Activated T-helper 2 cell treated with anti-CD3 and anti-CD28 coated beads, Interferon-gamma antibody, Interleukin-2, Interleukin-4, amounts not matched to agents 10 μg/mL and 5 μg/mL and 100 μg/mL, durations not matched to agents 14 hours and 24 hours and 36 hours (primary cell): ENCODE measurements at regions of chr4 and their contacts with region 1.

Region 1: GRCh38 chr4:184575306-184575705 is 73.9 kb downstream of the CASP3 start:
- DNase-seq: no peak
- H3K4me3 Mint-ChIP-seq: no peak overlapping the region
- H3K27ac Mint-ChIP-seq: peak overlapping the region; percentile 75
- H3K4me1 Mint-ChIP-seq: peaks cover 18% of the 10 kb centered on the region
- H3K27me3 Mint-ChIP-seq: no peaks in the 10 kb centered on the region

Region 2: DNA sequence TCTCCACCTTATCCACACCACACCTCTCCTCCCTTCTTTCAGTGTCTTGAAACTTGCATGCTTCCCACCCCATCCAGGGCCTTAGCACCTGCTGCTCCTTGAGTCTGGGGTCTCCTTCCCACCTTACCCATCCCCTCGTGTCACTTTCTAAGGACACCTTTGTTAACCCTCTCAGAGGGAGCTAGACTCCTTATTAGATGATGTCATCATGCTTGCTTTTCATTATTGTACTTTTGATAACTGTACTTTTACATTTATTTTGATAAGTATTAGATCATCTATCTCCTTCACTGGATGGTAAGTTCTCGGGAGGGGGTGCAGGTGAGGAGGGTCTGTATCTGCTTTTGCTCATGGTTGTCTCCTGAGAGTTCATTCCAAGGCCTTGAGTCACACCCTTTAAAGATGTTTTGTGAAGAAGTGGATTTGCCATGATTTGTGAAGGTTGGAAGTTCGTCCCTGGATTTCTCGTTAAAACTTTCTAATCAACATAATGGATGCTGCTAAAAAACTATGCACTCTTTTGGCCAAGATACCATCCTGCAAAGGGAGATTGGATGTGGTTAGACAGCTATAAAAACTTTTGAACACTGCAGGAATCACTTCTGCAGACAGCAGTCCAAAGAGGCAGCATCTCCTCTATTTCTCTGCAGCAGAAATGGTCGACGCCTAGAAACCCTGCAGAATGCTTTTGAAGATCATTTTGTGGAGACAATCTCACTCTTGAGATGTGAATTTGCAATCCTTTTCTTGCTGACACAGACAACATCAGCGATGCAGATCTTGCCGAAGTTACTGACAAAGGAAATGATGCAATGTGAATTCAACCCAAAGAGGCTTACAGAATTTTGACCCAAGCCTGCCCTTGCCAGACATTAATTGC is 427.2 kb before region 1 on chr4:
- intact Hi-C with region 1: no loop called
- DNase-seq: no peak
- H3K4me3 Mint-ChIP-seq: no peak overlapping the region
- H3K27ac Mint-ChIP-seq: no peak overlapping the region
- H3K4me1 Mint-ChIP-seq: peaks cover 12% of the 10 kb centered on the region
- H3K27me3 Mint-ChIP-seq: no peaks in the 10 kb centered on the region

Region 3: DNA sequence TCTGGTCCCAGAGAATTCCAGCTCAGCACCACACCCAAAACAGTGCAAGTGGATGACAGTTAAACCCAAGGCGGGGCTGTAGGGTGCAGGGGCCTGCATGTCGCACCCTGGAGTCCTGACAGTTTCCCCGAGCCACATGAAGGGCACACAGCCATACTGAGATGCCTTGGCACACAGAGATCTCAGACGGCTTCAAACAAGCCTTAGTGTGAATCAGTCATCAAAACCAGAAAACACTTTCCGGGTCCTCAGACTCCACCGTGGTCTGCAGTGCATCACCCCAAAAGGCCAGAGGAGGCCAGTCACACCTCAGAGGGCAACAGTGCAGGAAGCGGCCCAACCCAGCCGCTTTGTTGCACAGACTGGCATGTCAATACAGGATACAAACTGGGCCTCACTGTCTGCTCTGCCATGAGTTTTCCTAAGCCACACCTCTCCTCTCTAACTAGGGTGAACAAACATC is 293.0 kb before region 1 on chr4:
- intact Hi-C with region 1: loop called (anchors 2 kb)
- DNase-seq: peak; percentile 52
- H3K4me3 Mint-ChIP-seq: no peak overlapping the region
- H3K27ac Mint-ChIP-seq: peak overlapping the region; percentile 92
- H3K4me1 Mint-ChIP-seq: peaks cover 63% of the 10 kb centered on the region
- H3K27me3 Mint-ChIP-seq: no peaks in the 10 kb centered on the region

Region 4: GRCh38 chr4:184318852-184319251 is 256.5 kb before region 1 on chr4:
- intact Hi-C with region 1: loop called (anchors 1 kb)
- DNase-seq: peak; percentile 8
- H3K4me3 Mint-ChIP-seq: no peak overlapping the region
- H3K27ac Mint-ChIP-seq: peak overlapping the region; percentile 24
- H3K4me1 Mint-ChIP-seq: peaks cover 44% of the 10 kb centered on the region
- H3K27me3 Mint-ChIP-seq: no peaks in the 10 kb centered on the region

Region 5: DNA sequence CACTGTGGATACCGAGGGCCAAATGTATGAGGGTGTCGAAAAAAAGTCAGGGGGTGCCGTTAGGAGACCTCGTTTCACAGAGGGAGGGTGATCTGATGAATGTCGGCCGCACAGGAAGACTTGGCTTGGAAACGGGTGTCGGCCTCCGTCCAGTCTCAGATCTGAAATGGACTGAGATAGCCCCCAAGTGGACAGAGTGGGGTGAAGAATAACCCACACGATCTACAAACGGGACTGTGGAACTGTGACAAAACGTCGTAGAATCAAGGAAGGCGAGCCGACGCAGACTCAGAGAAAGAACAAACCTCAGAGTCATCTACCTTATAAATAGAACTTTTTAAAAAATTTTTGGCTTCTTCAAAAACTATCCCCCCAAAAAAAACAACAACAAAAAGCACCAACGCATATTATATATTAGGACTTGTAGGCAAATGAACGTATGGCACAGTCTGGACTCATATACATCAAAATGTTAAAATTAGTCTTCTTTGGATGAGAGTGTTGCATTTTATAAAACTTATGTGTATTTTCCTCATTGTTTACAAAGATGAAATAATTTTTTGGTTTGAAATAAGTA is 37.2 kb before region 1 on chr4:
- intact Hi-C with region 1: loop called (anchors 1 kb)
- DNase-seq: peak; percentile 53
- H3K4me3 Mint-ChIP-seq: peak overlapping the region; percentile 85
- H3K27ac Mint-ChIP-seq: peak overlapping the region; percentile 87
- H3K4me1 Mint-ChIP-seq: peaks cover 61% of the 10 kb centered on the region
- H3K27me3 Mint-ChIP-seq: no peaks in the 10 kb centered on the region

Region 6: GRCh38 chr4:184548648-184549341 is 26.5 kb before region 1 on chr4:
- intact Hi-C with region 1: no loop called
- DNase-seq: no peak
- H3K4me3 Mint-ChIP-seq: peak overlapping the region; percentile 48
- H3K27ac Mint-ChIP-seq: peak overlapping the region; percentile 66
- H3K4me1 Mint-ChIP-seq: peaks cover 48% of the 10 kb centered on the region
- H3K27me3 Mint-ChIP-seq: no peaks in the 10 kb centered on the region

Region 7: DNA sequence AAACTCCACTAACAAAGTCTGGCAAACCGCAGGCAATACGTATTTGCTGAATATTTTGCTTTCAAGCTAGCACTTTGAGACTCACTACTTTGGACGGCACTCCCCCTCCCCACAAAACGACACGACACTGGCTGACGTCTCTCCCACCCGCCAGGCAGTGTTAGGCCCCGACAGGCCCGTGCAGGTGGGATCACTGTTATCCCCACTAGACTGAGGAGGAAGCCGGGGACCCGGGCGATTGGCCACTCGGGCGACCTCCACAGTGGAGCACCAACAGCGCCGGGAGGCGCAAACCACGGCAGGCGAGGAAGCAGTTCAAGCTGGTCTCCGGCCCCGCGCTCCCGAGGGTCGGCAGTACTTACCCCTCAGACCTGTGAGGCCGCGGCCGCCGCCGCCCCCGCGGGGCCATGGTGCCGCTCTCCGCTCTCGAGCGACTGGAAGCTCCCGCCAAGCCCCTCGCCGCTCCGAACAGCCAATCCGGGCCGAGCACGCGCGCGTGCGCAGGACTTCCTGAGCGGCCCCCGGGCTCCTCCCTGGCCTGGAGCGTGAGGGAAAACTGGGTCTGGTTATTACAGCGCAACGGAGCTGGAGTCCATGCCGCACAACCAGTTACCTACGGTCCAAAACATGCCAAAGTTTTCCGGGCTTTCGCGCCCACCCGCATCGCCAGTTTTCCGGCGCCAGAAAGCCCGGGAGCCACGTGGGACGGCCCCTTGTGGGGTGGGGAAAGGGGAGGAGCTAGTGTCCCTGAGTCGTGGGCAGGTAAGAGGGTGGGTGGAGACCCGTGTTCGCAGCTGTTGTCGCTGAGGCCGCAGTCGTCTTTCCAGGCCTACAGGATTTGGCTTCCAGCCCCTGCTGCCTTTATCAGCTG is 158.6 kb after region 1 on chr4 and contains the start of gene CENPU:
- intact Hi-C with region 1: loop called (anchors 1 kb)
- DNase-seq: peak; percentile 96
- H3K4me3 Mint-ChIP-seq: peak within 1 kb of the TSS; percentile 93
- H3K27ac Mint-ChIP-seq: peak within 1 kb of the TSS; percentile 87
- H3K4me1 Mint-ChIP-seq: peaks cover 37% of the 10 kb centered on the region
- H3K27me3 Mint-ChIP-seq: no peaks in the 10 kb centered on the region
- total RNA-seq, gene CENPU: 60.9 and 74.2 TPM in 2 replicates

Region 8: DNA sequence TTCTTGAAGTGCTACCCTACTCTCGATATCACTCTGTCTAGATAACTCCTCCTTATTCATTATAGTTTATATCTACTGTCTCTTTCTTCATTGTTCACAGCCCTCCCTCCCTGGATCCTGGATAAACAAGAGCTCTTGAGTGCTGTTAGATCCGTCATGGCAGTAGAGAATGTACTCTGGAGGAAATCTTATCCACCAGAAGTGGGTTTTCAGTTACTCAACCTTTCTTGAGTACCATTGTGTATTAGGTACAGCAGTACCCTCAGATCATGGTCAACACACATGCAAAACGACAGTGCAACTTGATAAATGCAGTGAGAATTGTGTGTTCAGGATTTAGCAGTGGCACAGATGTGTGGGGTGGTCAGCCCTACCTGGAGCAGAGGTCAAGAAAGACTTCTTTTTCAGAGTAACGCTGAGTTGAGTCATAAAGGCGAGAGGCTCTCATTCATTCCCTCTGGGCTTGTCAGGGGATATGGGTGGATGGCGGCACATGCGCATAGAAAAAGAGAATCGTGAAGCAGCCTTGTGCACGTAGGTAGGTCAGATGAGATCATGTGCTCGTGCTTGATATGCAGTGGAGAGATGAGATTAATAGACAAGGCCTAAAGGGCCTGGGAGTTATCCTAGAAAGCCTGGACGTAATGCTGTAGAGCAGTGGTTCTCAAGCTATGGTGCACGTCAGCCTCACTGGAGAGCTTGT is 723.6 kb after region 1 on chr4:
- intact Hi-C with region 1: no loop called
- DNase-seq: no peak
- H3K4me3 Mint-ChIP-seq: no peak overlapping the region
- H3K27ac Mint-ChIP-seq: no peak overlapping the region
- H3K4me1 Mint-ChIP-seq: peaks cover 3% of the 10 kb centered on the region
- H3K27me3 Mint-ChIP-seq: no peaks in the 10 kb centered on the region